Panc1 (cell line): ENCODE measurements at regions of chr16 and their contacts with region 1.

Region 1: GRCh38 chr16:78607486-78607885 is 508.0 kb downstream of the WWOX start:
- DNase-seq: no peak
- ATAC-seq: no peak
- H3K4me3 ChIP-seq: no peak overlapping the region
- H3K27ac ChIP-seq: no peak overlapping the region
- H3K4me1 ChIP-seq: no peaks in the 10 kb centered on the region
- H3K27me3 ChIP-seq: no peaks in the 10 kb centered on the region
- CTCF ChIP-seq: no peak

Region 2: GRCh38 chr16:78227855-78228254 is 379.6 kb before region 1 on chr16:
- CTCF ChIA-PET with region 1: interaction called, 10 read pairs
- POLR2A ChIA-PET with region 1: no interaction called
- in situ Hi-C with region 1: no loop called
- intact Hi-C with region 1: no loop called
- DNase-seq: no peak
- ATAC-seq: no peak
- H3K4me3 ChIP-seq: no peak overlapping the region
- H3K27ac ChIP-seq: no peak overlapping the region
- H3K4me1 ChIP-seq: peaks cover 4% of the 10 kb centered on the region; the same call in 1 of the 2 replicates
- H3K27me3 ChIP-seq: no peaks in the 10 kb centered on the region
- CTCF ChIP-seq: peak; percentile 55